Activated CD4-positive, alpha-beta T cell treated with anti-CD3 and anti-CD28 coated beads for 36 hours (primary cell): ENCODE measurements at regions of chr1 and their contacts with region 1.

Region 1: GRCh38 chr1:90729504-90730242 is 12.6 kb upstream of the BARHL2 start:
- DNase-seq: peak; percentile 63
- ATAC-seq: peak; percentile 69
- H3K4me3 Mint-ChIP-seq: peak overlapping the region; percentile 41
- H3K27ac Mint-ChIP-seq: peak overlapping the region; percentile 31
- H3K4me1 Mint-ChIP-seq: peaks cover 48% of the 10 kb centered on the region
- H3K27me3 Mint-ChIP-seq: peaks cover 81% of the 10 kb centered on the region

Region 2: GRCh38 chr1:90707363-90707710 is 22.3 kb before region 1 on chr1:
- CTCF ChIA-PET with region 1: interaction called, 4 read pairs
- POLR2A ChIA-PET with region 1: no interaction called
- intact Hi-C with region 1: loop called (anchors 1 to 2 kb)
- DNase-seq: peak; percentile 46
- ATAC-seq: peak; percentile 26
- H3K4me3 Mint-ChIP-seq: peak overlapping the region; percentile 20
- H3K27ac Mint-ChIP-seq: no peak overlapping the region
- H3K4me1 Mint-ChIP-seq: peaks cover 10% of the 10 kb centered on the region
- H3K27me3 Mint-ChIP-seq: peaks cover 72% of the 10 kb centered on the region

Region 3: DNA sequence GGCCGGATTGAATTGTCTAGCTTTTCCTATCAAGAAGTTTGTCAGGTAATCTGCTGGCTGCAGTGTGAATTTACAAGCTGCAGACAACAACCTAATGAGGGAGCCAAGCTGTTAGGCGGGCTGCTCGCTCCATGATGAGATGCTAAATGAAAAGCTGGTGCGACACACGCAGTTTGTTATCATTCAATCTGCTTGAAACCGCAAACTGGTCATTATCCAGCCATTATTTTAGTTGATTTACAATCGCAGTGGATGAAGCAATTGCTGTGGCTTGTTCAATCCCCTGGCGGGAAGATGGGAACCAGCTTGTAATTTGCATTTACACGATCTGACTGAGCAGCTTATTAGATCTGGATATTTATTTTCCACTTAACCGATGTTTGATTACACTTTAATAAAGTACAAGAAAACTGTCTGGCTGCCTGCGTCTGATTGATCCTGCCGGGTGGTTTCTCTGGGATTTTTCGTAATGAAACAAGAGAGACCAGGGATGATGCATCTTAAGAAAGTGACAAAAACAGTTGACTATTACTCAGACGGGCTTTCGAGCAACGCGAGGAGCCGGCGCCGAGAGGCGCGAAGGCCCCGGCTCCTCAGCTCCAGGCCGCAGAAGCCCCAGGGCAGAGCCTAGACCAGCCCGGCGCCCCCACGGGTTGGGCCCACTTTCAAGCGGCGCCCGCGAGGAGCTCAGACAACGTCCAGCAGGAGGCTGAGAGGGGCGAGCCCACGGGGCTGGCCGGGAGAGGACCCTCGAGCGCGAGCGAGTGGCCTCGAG is 105.4 kb after region 1 on chr1:
- CTCF ChIA-PET with region 1: interaction called, 7 read pairs
- POLR2A ChIA-PET with region 1: no interaction called
- intact Hi-C with region 1: loop called (anchors 2 to 5 kb)
- DNase-seq: peak; percentile 60
- ATAC-seq: peak; percentile 87
- H3K4me3 Mint-ChIP-seq: no peak overlapping the region
- H3K27ac Mint-ChIP-seq: no peak overlapping the region
- H3K4me1 Mint-ChIP-seq: peaks cover 23% of the 10 kb centered on the region
- H3K27me3 Mint-ChIP-seq: peaks cover 75% of the 10 kb centered on the region

Region 4: DNA sequence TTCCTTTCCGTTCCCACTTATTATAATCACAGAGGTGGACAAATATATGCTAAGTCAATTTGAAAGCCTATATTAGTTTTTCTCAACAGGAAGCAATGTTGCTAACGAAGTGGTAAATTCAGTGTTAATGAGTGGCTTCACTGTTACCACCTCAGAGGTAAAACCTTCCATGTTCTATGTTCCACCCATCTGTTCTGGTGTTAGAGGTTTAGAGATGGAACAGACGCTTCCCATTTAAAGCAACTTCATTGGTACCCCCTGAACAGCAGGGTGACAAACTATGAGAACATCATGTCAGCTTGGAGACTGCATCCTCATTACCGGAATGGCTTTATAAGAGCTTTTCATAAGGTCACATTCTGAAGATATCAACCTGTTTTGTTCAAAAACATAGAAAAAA is 214.3 kb after region 1 on chr1:
- CTCF ChIA-PET with region 1: no interaction called
- POLR2A ChIA-PET with region 1: no interaction called
- intact Hi-C with region 1: no loop called
- DNase-seq: no peak
- ATAC-seq: no peak
- H3K4me3 Mint-ChIP-seq: no peak overlapping the region
- H3K27ac Mint-ChIP-seq: no peak overlapping the region
- H3K4me1 Mint-ChIP-seq: peaks cover 17% of the 10 kb centered on the region
- H3K27me3 Mint-ChIP-seq: no peaks in the 10 kb centered on the region